Left cardiac atrium (tissue), 4 donors: ENCODE measurements at regions of chr14 and their contacts with region 1.

Region 1: GRCh38 chr14:68862954-68863594 is 70.2 kb upstream of the ZFP36L1 start:
- DNase-seq: peak; percentile 80
- ATAC-seq: peak; percentile 79 to 81

Region 2: GRCh38 chr14:69107407-69108003 is 244.4 kb after region 1 on chr14:
- intact Hi-C with region 1: loop called (anchors 2 to 5 kb)
- DNase-seq: no peak
- ATAC-seq: peak; percentile 65 to 67